ENCODE measurements at regions of chr19 and their contacts with region 1.

Region 1: DNA sequence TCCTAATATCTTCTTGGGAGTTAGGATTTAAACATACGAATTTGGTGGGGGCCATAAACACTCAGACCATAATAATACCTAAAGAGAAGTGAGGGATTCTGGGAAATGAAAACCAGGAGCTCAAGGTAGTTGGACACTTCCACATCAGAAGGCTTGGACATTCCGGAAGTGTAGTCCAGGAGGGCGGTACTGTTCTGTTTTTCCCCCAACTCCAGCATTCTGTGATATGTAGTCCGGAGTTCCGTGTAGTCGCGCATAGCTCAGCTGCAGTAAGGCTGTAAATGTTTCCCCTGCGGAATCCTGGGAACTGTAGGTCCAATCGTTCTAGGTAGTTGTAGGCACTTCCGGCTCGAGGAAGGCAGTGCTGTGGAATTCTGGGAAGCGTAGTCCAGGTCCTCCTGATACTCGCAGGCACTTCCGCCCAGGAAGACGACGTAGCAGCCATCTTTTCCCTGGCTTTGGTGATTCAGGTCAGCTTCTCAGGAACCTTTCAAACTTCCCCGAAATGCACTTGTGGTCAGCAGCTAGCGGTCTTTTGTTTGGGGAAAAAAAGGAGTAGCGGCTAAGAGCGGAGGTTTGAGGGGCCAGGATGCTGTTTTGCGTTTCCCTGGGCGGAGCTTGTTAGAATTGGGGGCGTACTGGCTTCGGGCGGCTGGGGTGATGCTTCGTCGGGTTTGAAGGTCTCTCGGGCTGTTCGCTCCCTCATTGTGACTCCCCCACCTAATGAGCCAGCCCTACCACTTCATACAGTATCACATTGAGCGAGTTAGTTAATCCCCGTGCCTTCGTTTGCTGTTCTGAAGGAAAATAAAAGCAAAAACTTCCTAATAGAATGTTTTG is at the start of gene ZNF226:
- DNase-seq: peak; percentile 57
- ATAC-seq: peak; percentile 92
- H3K4me3 Mint-ChIP-seq: peak within 1 kb of the TSS; percentile 99
- H3K27ac Mint-ChIP-seq: peak within 1 kb of the TSS; percentile 97
- H3K4me1 Mint-ChIP-seq: peaks cover 31% of the 10 kb centered on the region
- H3K27me3 Mint-ChIP-seq: no peaks in the 10 kb centered on the region
- CTCF ChIP-seq: no peak
- total RNA-seq, gene ZNF226: 37.7 and 38.3 TPM in 2 replicates

Region 2: DNA sequence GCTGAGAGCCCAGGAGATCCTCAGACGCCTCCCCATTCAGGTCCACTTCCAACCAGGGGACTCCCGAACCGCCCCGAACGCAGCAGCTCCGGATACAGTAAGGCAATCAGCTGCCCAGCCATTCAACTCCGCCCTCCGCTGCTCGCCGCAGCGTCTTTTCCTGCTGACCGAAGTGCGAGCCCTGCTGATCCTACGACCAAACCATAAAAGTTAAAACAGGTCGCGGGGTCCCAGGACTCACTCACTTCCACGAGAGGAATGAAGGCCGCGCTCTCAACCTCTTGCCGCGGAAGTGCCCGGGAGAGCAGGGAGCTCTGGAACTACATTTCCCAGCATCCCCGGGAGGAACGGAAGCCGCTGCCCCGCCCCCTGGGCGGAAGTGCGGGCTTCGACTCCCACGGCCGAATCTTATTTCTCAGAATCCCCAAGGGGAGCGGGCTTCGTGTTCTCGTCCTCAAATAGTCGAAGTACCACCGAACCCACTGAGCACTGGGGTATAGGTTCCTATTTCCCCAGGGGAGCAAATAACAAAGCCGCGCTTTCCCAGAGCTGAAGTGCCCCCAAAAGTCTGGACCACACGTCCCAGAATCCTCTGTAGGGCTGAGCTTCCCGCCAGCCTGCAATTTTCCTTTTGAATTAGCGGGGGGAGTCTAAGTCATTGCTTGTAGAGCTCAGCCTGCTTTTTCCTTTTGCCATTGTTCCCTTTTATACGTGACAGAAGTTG is 229.7 kb before region 1 on chr19 and contains the start of gene ZNF45:
- CTCF ChIA-PET with region 1: no interaction called
- POLR2A ChIA-PET with region 1: interaction called, 8 read pairs
- intact Hi-C with region 1: loop called (anchors 1 kb)
- DNase-seq: peak; percentile 81
- ATAC-seq: peak; percentile 96
- H3K4me3 Mint-ChIP-seq: peak within 1 kb of the TSS; percentile 93
- H3K27ac Mint-ChIP-seq: peak within 1 kb of the TSS; percentile 89
- H3K4me1 Mint-ChIP-seq: peaks cover 22% of the 10 kb centered on the region
- H3K27me3 Mint-ChIP-seq: peaks cover 4% of the 10 kb centered on the region
- CTCF ChIP-seq: no peak
- total RNA-seq, gene ZNF45: 17.2 and 19.1 TPM in 2 replicates

Region 3: GRCh38 chr19:44113138-44113783 is 51.6 kb before region 1 on chr19 and contains the start of gene ZNF225:
- CTCF ChIA-PET with region 1: no interaction called
- POLR2A ChIA-PET with region 1: interaction called, 9 read pairs
- intact Hi-C with region 1: loop called (anchors 1 kb)
- DNase-seq: peak; percentile 65
- ATAC-seq: peak; percentile 95
- H3K4me3 Mint-ChIP-seq: peak within 1 kb of the TSS; percentile 97
- H3K27ac Mint-ChIP-seq: peak within 1 kb of the TSS; percentile 83
- H3K4me1 Mint-ChIP-seq: peaks cover 31% of the 10 kb centered on the region
- H3K27me3 Mint-ChIP-seq: no peaks in the 10 kb centered on the region
- CTCF ChIP-seq: no peak
- total RNA-seq, gene ZNF225: 7.9 and 9.2 TPM in 2 replicates

Region 4: GRCh38 chr19:44149776-44150175 is 15.1 kb before region 1 on chr19:
- CTCF ChIA-PET with region 1: no interaction called
- POLR2A ChIA-PET with region 1: no interaction called
- intact Hi-C with region 1: no loop called
- DNase-seq: no peak
- ATAC-seq: no peak
- H3K4me3 Mint-ChIP-seq: no peak overlapping the region
- H3K27ac Mint-ChIP-seq: no peak overlapping the region
- H3K4me1 Mint-ChIP-seq: no peaks in the 10 kb centered on the region
- H3K27me3 Mint-ChIP-seq: no peaks in the 10 kb centered on the region
- CTCF ChIP-seq: no peak

Region 5: GRCh38 chr19:44182145-44182544 is 17.3 kb after region 1 on chr19:
- CTCF ChIA-PET with region 1: no interaction called
- POLR2A ChIA-PET with region 1: no interaction called
- intact Hi-C with region 1: no loop called
- DNase-seq: no peak
- ATAC-seq: no peak
- H3K4me3 Mint-ChIP-seq: no peak overlapping the region
- H3K27ac Mint-ChIP-seq: no peak overlapping the region
- H3K4me1 Mint-ChIP-seq: no peaks in the 10 kb centered on the region
- H3K27me3 Mint-ChIP-seq: no peaks in the 10 kb centered on the region
- CTCF ChIP-seq: no peak

Region 6: GRCh38 chr19:44207126-44207803 is 42.4 kb after region 1 on chr19:
- CTCF ChIA-PET with region 1: no interaction called
- POLR2A ChIA-PET with region 1: interaction called, 32 read pairs
- intact Hi-C with region 1: loop called (anchors 1 kb)
- DNase-seq: peak; percentile 71
- ATAC-seq: peak; percentile 91
- H3K4me3 Mint-ChIP-seq: peak overlapping the region; percentile 94
- H3K27ac Mint-ChIP-seq: peak overlapping the region; percentile 86
- H3K4me1 Mint-ChIP-seq: peaks cover 8% of the 10 kb centered on the region
- H3K27me3 Mint-ChIP-seq: peaks cover 3% of the 10 kb centered on the region
- CTCF ChIP-seq: no peak

Region 7: DNA sequence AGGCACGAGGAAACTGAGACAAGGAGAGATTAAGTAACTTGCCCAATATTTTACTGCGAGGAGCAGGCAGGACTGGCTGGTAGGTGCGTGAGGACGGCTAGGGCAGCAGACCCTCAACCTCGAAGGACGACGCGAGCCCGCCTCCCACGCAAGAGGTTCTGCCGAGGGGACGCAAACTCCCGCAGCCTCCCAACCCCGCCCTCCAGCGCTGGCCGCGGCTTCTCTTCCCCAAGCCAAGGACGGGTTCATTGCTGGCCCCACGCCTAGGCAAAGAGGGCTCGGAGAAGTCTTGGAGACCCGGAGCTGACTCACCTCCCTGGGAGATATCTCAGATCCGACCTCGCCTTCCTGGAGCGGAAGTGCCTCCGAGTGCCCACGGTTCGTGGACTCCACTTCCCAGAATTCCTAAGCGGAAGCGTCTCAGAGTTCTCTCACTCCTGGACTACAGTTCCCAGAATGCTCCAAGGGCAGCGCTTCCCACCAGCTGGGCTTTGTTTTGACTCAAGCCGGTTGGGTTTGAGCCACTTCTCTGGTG is 139.8 kb after region 1 on chr19 and contains the start of gene ZNF235:
- CTCF ChIA-PET with region 1: no interaction called
- POLR2A ChIA-PET with region 1: interaction called, 9 read pairs
- intact Hi-C with region 1: loop called (anchors 2 kb)
- DNase-seq: peak; percentile 61
- ATAC-seq: peak; percentile 97
- H3K4me3 Mint-ChIP-seq: peak within 1 kb of the TSS; percentile 96
- H3K27ac Mint-ChIP-seq: peak within 1 kb of the TSS; percentile 76
- H3K4me1 Mint-ChIP-seq: peaks cover 20% of the 10 kb centered on the region
- H3K27me3 Mint-ChIP-seq: peaks cover 7% of the 10 kb centered on the region
- CTCF ChIP-seq: no peak
- total RNA-seq, gene ZNF235: 11.6 and 14.5 TPM in 2 replicates

Region 8: GRCh38 chr19:44500148-44500956 is 335.5 kb after region 1 on chr19 and contains the start of gene ZNF180:
- CTCF ChIA-PET with region 1: no interaction called
- POLR2A ChIA-PET with region 1: interaction called, 9 read pairs
- intact Hi-C with region 1: loop called (anchors 1 kb)
- DNase-seq: peak; percentile 95
- ATAC-seq: peak; percentile 91
- H3K4me3 Mint-ChIP-seq: peak within 1 kb of the TSS; percentile 96
- H3K27ac Mint-ChIP-seq: peak within 1 kb of the TSS; percentile 86
- H3K4me1 Mint-ChIP-seq: peaks cover 36% of the 10 kb centered on the region
- H3K27me3 Mint-ChIP-seq: peaks cover 10% of the 10 kb centered on the region
- CTCF ChIP-seq: no peak
- total RNA-seq, gene ZNF180: 11.6 and 14.4 TPM in 2 replicates